CD4-positive, alpha-beta T cell (primary cell): ENCODE measurements at regions of chr14 and their contacts with region 1.

Region 1: DNA sequence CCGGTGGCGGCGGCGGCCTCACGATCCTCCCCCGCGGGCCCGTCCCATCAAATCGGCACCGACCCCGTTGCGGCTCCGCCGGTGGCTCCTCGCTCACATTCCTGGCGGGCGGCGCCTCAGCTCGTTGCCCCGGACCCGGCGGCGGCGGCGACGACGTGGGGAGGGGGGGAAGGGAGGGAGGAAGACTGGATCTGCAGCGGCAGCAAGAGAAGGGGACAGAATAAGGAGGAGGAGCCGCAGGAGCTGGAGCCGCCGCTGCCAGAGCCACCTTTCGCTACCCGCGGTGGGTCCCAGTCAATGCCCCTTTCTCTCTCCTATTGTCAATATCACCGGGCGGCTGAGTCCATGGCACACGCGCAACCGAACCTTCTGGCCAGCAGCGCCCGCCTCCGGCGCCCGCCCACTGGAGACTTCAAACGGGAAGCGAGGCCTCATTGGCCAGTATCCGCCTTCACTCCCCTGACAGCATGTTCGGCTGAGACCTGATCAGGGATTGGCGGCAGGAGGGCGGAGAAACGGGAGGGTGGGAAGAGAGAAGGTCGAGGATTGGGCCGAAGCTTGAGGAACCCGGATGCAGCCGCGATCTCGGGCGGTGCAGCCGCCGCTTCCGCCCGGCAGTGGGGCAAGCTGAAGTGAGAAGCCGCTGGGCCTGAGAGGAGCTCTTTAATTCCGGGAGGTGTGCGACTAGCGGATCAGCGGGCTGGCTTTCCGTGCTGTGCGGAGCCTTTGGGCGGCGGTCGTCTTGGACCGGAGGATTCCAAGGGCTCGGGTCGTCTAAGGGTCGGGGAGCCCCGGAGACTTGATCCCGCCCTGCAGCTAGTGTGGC is at the start of gene PPP2R5E:
- DNase-seq: peak; percentile 94 to 99 (median 96)
- ATAC-seq: peak; percentile 96
- H3K4me3 ChIP-seq: peak within 1 kb of the TSS; percentile 99
- H3K4me3 Mint-ChIP-seq: peak within 1 kb of the TSS; percentile 98
- H3K27ac ChIP-seq: peak within 1 kb of the TSS; percentile 79 to 82
- H3K27ac Mint-ChIP-seq: peak within 1 kb of the TSS; percentile 90
- H3K4me1 ChIP-seq: peaks cover 18% of the 10 kb centered on the region
- H3K4me1 Mint-ChIP-seq: peaks cover 46% of the 10 kb centered on the region
- H3K27me3 ChIP-seq: no peaks in the 10 kb centered on the region
- H3K27me3 Mint-ChIP-seq: no peaks in the 10 kb centered on the region
- CTCF ChIP-seq: no peak
- total RNA-seq, gene PPP2R5E: 31.2 to 32.3 TPM

Region 2: GRCh38 chr14:63367742-63368364 is 175.4 kb before region 1 on chr14:
- CTCF ChIA-PET with region 1: no interaction called
- POLR2A ChIA-PET with region 1: no interaction called
- intact Hi-C with region 1: no loop called
- DNase-seq: no peak
- ATAC-seq: no peak
- H3K4me3 ChIP-seq: no peak overlapping the region
- H3K4me3 Mint-ChIP-seq: no peak overlapping the region
- H3K27ac ChIP-seq: no peak overlapping the region
- H3K27ac Mint-ChIP-seq: no peak overlapping the region
- H3K4me1 ChIP-seq: no peaks in the 10 kb centered on the region
- H3K4me1 Mint-ChIP-seq: no peaks in the 10 kb centered on the region
- H3K27me3 ChIP-seq: no peaks in the 10 kb centered on the region
- H3K27me3 Mint-ChIP-seq: no peaks in the 10 kb centered on the region
- CTCF ChIP-seq: no peak

Region 3: DNA sequence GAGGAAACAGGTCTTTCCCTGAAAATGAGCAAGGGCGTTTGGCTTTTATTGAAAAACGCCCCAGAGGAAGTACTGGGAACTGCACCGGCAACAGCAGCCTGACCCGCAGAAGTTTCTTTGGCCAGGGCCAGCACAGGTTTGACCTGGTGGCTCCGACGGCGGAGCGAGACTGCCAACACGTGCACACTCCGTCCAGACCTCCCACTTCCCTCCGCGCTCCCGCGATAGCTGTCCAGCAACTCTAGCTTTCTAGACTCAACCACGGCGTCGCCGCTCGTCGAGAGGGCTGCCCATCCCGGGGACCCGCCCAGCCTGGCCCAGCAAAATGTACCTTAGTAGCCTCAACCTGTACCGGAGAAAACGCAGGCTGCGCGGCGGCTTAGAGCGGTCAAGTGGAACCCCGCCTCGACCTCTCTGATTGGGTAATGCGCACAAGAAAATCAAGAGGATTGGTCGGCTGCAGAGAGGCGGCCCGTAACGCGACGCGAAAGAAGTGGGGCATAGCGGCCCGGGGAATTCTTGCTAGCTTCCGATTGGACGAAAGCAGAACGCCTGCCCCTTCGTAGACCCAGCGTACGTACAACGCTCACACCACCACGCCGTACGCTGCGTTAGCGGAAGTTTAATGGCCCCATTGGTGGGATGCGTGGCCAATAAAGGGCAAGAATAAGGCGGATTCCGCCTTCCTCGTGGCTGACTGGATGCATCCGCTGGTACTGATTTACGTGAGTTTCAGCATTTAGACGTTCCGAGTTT is 98.4 kb after region 1 on chr14 and contains the start of gene WDR89:
- CTCF ChIA-PET with region 1: interaction called, 4 read pairs
- POLR2A ChIA-PET with region 1: interaction called, 35 read pairs
- intact Hi-C with region 1: loop called (anchors 1 to 2 kb)
- DNase-seq: peak; percentile 90 to 99 (median 94)
- ATAC-seq: peak; percentile 83
- H3K4me3 ChIP-seq: peak within 1 kb of the TSS; percentile 96
- H3K4me3 Mint-ChIP-seq: peak within 1 kb of the TSS; percentile 91
- H3K27ac ChIP-seq: peak within 1 kb of the TSS; percentile 98 to 99
- H3K27ac Mint-ChIP-seq: peak within 1 kb of the TSS; percentile 91
- H3K4me1 ChIP-seq: peaks cover 27% of the 10 kb centered on the region
- H3K4me1 Mint-ChIP-seq: peaks cover 43% of the 10 kb centered on the region
- H3K27me3 ChIP-seq: no peaks in the 10 kb centered on the region
- H3K27me3 Mint-ChIP-seq: no peaks in the 10 kb centered on the region
- CTCF ChIP-seq: peak; percentile 47
- total RNA-seq, gene WDR89: 12.4 to 13.4 TPM

Region 4: GRCh38 chr14:63650256-63650952 is 107.2 kb after region 1 on chr14:
- CTCF ChIA-PET with region 1: no interaction called
- POLR2A ChIA-PET with region 1: interaction called, 33 read pairs
- intact Hi-C with region 1: no loop called
- DNase-seq: peak; percentile 35 to 92 (median 56)
- ATAC-seq: peak; percentile 97
- H3K4me3 ChIP-seq: no peak overlapping the region
- H3K4me3 Mint-ChIP-seq: peak overlapping the region; percentile 85
- H3K27ac ChIP-seq: peak overlapping the region; percentile 80 to 88
- H3K27ac Mint-ChIP-seq: peak overlapping the region; percentile 100
- H3K4me1 ChIP-seq: peaks cover 42% of the 10 kb centered on the region
- H3K4me1 Mint-ChIP-seq: peaks cover 50% of the 10 kb centered on the region
- H3K27me3 ChIP-seq: no peaks in the 10 kb centered on the region
- H3K27me3 Mint-ChIP-seq: no peaks in the 10 kb centered on the region
- CTCF ChIP-seq: no peak

Region 5: GRCh38 chr14:63677821-63678380 is 134.7 kb after region 1 on chr14:
- CTCF ChIA-PET with region 1: no interaction called
- POLR2A ChIA-PET with region 1: no interaction called
- intact Hi-C with region 1: no loop called
- DNase-seq: no peak
- ATAC-seq: no peak
- H3K4me3 ChIP-seq: no peak overlapping the region
- H3K4me3 Mint-ChIP-seq: no peak overlapping the region
- H3K27ac ChIP-seq: no peak overlapping the region
- H3K27ac Mint-ChIP-seq: no peak overlapping the region
- H3K4me1 ChIP-seq: no peaks in the 10 kb centered on the region
- H3K4me1 Mint-ChIP-seq: no peaks in the 10 kb centered on the region
- H3K27me3 ChIP-seq: no peaks in the 10 kb centered on the region
- H3K27me3 Mint-ChIP-seq: no peaks in the 10 kb centered on the region
- CTCF ChIP-seq: no peak

Region 6: GRCh38 chr14:63770187-63770807 is 227.1 kb after region 1 on chr14:
- CTCF ChIA-PET with region 1: no interaction called
- POLR2A ChIA-PET with region 1: interaction called, 6 read pairs
- intact Hi-C with region 1: loop called (anchors 5 kb)
- DNase-seq: peak; percentile 11 to 79 (median 46)
- ATAC-seq: peak; percentile 76
- H3K4me3 ChIP-seq: no peak overlapping the region
- H3K4me3 Mint-ChIP-seq: no peak overlapping the region
- H3K27ac ChIP-seq: no peak overlapping the region
- H3K27ac Mint-ChIP-seq: no peak overlapping the region
- H3K4me1 ChIP-seq: no peaks in the 10 kb centered on the region
- H3K4me1 Mint-ChIP-seq: peaks cover 5% of the 10 kb centered on the region
- H3K27me3 ChIP-seq: no peaks in the 10 kb centered on the region
- H3K27me3 Mint-ChIP-seq: no peaks in the 10 kb centered on the region
- CTCF ChIP-seq: peak; percentile 75

Region 7: DNA sequence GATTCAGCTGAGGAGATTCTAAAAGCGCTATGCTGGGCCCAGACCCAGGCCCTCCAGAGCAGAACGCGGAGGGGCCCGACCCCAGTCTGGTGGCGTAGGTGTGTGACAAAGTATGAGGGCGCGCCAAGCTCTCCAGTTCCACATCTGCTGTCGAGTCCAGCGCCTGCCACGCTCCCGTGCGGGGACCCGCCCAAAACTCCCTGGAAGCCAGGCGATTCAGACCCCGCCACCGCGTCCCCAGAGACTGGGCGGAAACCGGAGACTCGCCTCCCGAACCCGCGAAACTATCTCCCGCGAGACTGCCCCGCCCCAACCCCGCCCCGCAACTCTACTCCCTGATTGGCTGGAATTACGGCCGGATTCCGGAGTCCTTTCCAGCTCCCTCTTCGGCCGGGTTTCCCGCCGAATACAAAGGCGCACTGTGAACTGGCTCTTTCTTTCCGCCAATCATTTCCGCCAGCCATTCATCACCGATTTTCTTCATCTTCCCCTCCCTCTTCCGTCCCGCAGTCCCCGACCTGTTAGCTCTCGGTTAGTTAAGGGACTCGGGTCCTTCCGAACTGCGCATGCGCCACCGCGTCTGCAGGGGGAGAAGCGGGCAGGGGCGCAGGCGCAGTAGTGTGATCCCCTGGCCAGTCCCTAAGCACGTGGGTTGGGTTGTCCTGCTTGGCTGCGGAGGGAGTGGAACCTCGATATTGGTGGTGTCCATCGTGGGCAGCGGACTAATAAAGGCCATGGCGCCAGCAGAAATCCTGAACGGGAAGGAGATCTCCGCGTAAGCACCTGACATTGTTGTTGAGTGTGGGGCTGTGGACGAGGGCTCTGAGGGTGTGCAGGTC is 844.7 kb after region 1 on chr14 and contains the start of gene MTHFD1:
- CTCF ChIA-PET with region 1: no interaction called
- POLR2A ChIA-PET with region 1: no interaction called
- intact Hi-C with region 1: loop called in 1 of 2 experiments (anchors 10 kb)
- DNase-seq: peak; percentile 89 to 99 (median 96)
- ATAC-seq: peak; percentile 88
- H3K4me3 ChIP-seq: peak within 1 kb of the TSS; percentile 83
- H3K4me3 Mint-ChIP-seq: peak within 1 kb of the TSS; percentile 94
- H3K27ac ChIP-seq: peak within 1 kb of the TSS; percentile 43 to 55
- H3K27ac Mint-ChIP-seq: peak within 1 kb of the TSS; percentile 85
- H3K4me1 ChIP-seq: peaks cover 27% of the 10 kb centered on the region
- H3K4me1 Mint-ChIP-seq: peaks cover 33% of the 10 kb centered on the region
- H3K27me3 ChIP-seq: no peaks in the 10 kb centered on the region
- H3K27me3 Mint-ChIP-seq: no peaks in the 10 kb centered on the region
- CTCF ChIP-seq: no peak
- total RNA-seq, gene MTHFD1: 13.3 to 18.9 TPM

Region 8: DNA sequence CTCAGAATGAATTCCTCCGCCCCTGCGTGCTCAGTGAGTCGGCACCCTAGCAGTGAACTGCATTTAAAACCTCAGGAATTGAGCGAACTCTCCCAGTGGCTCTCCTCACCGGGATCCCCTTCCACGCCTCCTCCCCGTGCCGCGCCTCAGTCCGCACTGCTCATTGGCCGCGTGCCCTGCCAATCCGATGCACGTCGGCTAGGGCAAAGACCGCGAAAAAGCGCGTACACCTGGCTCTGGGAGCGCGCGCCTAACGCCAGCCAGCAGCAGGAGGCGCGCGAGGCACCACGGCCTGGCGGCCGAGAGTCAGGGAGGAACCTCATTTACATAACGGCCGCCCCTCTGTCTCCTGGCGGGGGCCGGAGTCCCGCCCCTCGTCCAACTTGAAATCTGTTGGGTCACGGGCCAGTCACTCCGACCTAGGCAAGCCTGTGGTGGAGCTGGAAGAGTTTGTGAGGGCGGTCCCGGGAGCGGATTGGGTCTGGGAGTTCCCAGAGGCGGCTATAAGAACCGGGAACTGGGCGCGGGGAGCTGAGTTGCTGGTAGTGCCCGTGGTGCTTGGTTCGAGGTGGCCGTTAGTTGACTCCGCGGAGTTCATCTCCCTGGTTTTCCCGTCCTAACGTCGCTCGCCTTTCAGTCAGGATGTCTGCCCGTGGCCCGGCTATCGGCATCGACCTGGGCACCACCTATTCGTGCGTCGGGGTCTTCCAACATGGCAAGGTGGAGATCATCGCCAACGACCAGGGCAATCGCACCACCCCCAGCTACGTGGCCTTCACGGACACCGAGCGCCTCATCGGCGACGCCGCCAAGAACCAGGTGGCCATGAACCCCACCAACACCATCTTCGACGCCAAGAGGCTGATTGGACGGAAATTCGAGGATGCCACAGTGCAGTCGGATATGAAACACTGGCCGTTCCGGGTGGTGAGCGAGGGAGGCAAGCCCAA is 997.3 kb after region 1 on chr14 and contains the start of gene HSPA2:
- CTCF ChIA-PET with region 1: no interaction called
- POLR2A ChIA-PET with region 1: no interaction called
- intact Hi-C with region 1: loop called in 1 of 2 experiments (anchors 10 kb)
- DNase-seq: peak; percentile 85 to 98 (median 92)
- ATAC-seq: peak; percentile 84
- H3K4me3 ChIP-seq: peak within 1 kb of the TSS; percentile 86
- H3K4me3 Mint-ChIP-seq: peak within 1 kb of the TSS; percentile 98
- H3K27ac ChIP-seq: no peak within 1 kb of the TSS
- H3K27ac Mint-ChIP-seq: peak within 1 kb of the TSS; percentile 78
- H3K4me1 ChIP-seq: peaks cover 41% of the 10 kb centered on the region
- H3K4me1 Mint-ChIP-seq: peaks cover 43% of the 10 kb centered on the region
- H3K27me3 ChIP-seq: no peaks in the 10 kb centered on the region
- H3K27me3 Mint-ChIP-seq: peaks cover 6% of the 10 kb centered on the region
- CTCF ChIP-seq: peak; percentile 72
- total RNA-seq, gene HSPA2: 1.5 to 1.9 TPM